ENCODE measurements at regions of chr18 and their contacts with region 1.

Region 1: DNA sequence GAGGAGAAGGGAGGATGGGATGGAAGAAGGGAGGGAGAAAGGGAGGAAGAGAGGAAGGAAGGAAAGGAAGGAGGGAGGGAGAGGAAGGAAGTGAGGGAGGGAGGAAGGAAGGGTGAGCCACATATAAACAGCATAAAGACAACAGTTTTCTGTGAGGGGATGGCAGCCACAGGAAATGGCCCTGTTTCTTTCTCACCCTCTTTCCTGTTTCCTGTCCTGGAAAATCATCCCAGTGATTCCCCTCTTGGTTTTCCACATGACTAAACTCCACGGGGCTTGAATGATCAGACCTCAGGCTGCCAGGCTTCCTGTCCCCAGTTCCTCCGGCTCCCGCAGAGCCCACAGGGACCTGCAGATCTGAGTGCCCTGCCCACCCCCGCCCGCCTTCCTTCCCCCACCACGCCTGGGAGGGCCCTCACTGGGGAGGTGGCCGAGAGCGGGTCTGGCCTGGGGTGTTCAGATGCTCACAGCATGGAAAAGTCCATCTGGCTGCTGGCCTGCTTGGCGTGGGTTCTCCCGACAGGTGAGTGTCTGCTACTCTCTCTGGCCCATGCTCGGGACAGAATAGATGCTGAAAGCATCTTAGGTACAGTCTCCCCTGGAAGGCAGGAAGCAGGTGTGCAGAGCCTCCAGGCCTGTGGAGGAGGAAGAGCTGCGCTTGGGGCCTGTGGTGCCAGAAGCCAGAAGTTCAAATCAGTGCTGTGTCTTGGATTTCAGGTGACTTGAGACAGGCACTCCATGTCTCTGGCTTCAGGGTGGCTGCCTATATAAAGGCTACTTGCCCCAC is at the start of gene SIGLEC15:
- DNase-seq: no peak
- ATAC-seq: peak; percentile 23
- H3K4me3 ChIP-seq: no peak within 1 kb of the TSS
- H3K4me3 Mint-ChIP-seq: no peak within 1 kb of the TSS
- H3K27ac ChIP-seq: no peak within 1 kb of the TSS
- H3K27ac Mint-ChIP-seq: no peak within 1 kb of the TSS
- H3K4me1 ChIP-seq: peaks cover 20 to 27% of the 10 kb centered on the region in 2 donors
- H3K4me1 Mint-ChIP-seq: peaks cover 41% of the 10 kb centered on the region
- H3K27me3 ChIP-seq: peaks cover 0 to 8% (median 4%) of the 10 kb centered on the region in 4 experiments
- H3K27me3 Mint-ChIP-seq: peaks cover 53% of the 10 kb centered on the region
- CTCF ChIP-seq: no peak
- total RNA-seq, gene SIGLEC15: not detected in 2 replicates

Region 2: DNA sequence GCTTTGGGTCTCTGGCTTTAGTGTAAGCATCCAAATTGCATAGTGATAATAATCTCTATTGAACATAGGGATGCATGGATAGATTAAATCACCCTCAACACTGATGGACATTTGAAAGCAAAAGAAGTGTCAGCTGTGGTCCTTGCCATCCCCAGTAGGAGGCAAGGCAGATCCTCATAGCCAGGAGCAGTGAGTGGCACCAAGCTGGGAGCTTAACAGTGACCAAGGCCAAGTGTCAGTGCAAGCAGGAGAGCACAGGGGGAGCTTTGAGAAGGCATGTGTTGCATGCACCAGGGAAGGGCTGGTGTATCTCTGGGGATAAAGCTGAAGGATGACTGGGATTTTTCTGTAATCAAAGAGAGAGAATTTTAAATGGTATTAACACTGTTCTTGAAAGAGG is 86.8 kb before region 1 on chr18:
- CTCF ChIA-PET with region 1: no interaction called
- POLR2A ChIA-PET with region 1: interaction called, 16 read pairs
- intact Hi-C with region 1: no loop called
- DNase-seq: no peak
- ATAC-seq: no peak
- H3K4me3 ChIP-seq: no peak overlapping the region
- H3K4me3 Mint-ChIP-seq: no peak overlapping the region
- H3K27ac ChIP-seq: no peak overlapping the region
- H3K27ac Mint-ChIP-seq: no peak overlapping the region
- H3K4me1 ChIP-seq: no peaks in the 10 kb centered on the region
- H3K4me1 Mint-ChIP-seq: no peaks in the 10 kb centered on the region
- H3K27me3 ChIP-seq: no peaks in the 10 kb centered on the region
- H3K27me3 Mint-ChIP-seq: peaks cover 5% of the 10 kb centered on the region
- CTCF ChIP-seq: no peak

Region 3: GRCh38 chr18:47313901-47314300 is 1488.5 kb after region 1 on chr18:
- CTCF ChIA-PET with region 1: no interaction called
- POLR2A ChIA-PET with region 1: no interaction called
- intact Hi-C with region 1: no loop called
- DNase-seq: no peak
- ATAC-seq: no peak
- H3K4me3 ChIP-seq: no peak overlapping the region
- H3K4me3 Mint-ChIP-seq: no peak overlapping the region
- H3K27ac ChIP-seq: no peak overlapping the region
- H3K27ac Mint-ChIP-seq: no peak overlapping the region
- H3K4me1 ChIP-seq: no peaks in the 10 kb centered on the region
- H3K4me1 Mint-ChIP-seq: no peaks in the 10 kb centered on the region
- H3K27me3 ChIP-seq: no peaks in the 10 kb centered on the region
- H3K27me3 Mint-ChIP-seq: peaks cover 20% of the 10 kb centered on the region
- CTCF ChIP-seq: no peak

Measured in B cell (primary cell).